HCT116 (cell line): ENCODE measurements at regions of chr5 and their contacts with region 1.

Region 1: DNA sequence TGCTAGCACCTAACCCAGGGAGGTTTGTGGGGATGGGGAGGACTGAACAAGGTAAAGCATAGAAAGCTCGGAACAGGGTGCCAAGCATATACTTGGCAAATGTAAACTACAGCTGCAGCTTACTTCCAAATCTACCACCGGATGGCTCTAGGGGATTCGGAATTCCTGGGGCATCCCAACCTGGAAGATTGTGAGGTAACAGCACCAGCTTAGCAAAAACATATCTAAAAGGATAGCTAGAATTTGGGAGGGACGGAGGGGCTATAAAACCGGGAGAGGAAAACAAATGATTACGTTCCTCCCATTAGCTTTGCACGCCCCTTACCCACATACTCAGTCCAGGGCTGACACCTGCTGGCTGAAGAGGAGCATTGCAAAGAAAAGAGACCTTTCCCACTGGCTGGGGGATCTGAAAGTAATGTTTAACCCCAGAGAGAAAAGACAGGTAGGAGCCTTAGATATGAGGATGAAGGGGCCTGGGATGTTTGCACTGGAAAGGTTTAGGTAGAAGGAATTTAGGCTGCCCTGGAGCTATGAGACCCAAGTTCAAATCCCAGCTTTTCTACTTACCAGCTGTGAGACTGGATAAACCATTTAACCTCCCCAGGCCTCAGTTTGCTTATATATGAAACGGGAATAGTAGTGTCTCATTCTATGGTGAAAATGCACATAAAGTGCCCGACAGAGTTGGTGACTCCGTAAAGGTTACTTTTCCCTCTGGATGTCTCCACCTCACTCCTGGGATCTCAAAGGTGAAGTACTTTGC is 73.6 kb downstream of the FAM114A2 start:
- DNase-seq: peak; percentile 32
- ATAC-seq: peak; percentile 93
- H3K4me3 ChIP-seq: no peak overlapping the region
- H3K27ac ChIP-seq: no peak overlapping the region
- H3K4me1 ChIP-seq: no peaks in the 10 kb centered on the region
- H3K27me3 ChIP-seq: peaks cover 18% of the 10 kb centered on the region; the same call in 1 of the 2 replicates
- CTCF ChIP-seq: peak; percentile 84 to 93 (median 91)
- POLR2A ChIP-seq: no peak
- RAD21 ChIP-seq: peak; percentile 95

Region 2: GRCh38 chr5:152532714-152533113 is 1432.3 kb before region 1 on chr5:
- CTCF ChIA-PET with region 1: interaction called, 22 read pairs
- POLR2A ChIA-PET with region 1: no interaction called
- RAD21 ChIA-PET with region 1: interaction called in 1 of 2 experiments, 3 read pairs
- intact Hi-C with region 1: loop called (anchors 1 kb)
- DNase-seq: peak; percentile 42
- ATAC-seq: peak; percentile 64
- H3K4me3 ChIP-seq: no peak overlapping the region
- H3K27ac ChIP-seq: no peak overlapping the region
- H3K4me1 ChIP-seq: no peaks in the 10 kb centered on the region
- H3K27me3 ChIP-seq: peaks cover 7% of the 10 kb centered on the region; the same call in 1 of the 2 replicates
- CTCF ChIP-seq: peak in 2 of 3 experiments; percentile 57 to 63; a peak in 3 of 6 replicates
- POLR2A ChIP-seq: no peak
- RAD21 ChIP-seq: peak; percentile 78

Region 3: DNA sequence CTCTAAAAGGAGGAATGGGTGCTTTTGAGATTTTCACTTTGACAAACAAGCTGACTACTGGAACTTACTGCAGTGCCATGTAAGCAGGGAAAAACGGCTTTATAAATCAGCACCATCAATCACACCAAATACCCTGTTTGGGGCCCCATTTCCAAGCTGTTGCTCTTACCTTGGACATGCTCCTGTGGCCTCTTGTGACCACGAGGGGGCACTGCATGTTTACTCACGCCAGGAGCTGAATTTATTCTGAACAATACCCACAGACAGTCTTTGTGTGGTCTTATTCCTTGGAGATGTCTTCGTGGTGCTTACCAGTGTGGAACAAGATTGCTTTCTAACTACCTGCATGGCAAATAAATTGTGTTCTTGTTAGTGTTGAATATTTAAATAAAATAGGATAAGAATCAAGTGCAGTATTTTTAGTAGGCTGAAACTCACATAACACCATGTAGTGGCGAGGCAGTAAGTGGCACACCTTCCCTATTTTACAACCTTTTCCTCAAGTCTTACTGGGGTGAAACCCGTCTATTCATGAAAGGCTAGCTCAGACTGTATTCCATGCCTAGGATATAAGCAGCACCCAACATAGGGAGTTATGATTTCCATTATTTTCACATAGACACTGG is 1404.4 kb before region 1 on chr5:
- CTCF ChIA-PET with region 1: interaction called, 12 read pairs
- POLR2A ChIA-PET with region 1: no interaction called
- RAD21 ChIA-PET with region 1: interaction called, 3 to 4 read pairs
- intact Hi-C with region 1: loop called (anchors 1 kb)
- DNase-seq: peak; percentile 18
- ATAC-seq: peak; percentile 63
- H3K4me3 ChIP-seq: no peak overlapping the region
- H3K27ac ChIP-seq: no peak overlapping the region
- H3K4me1 ChIP-seq: no peaks in the 10 kb centered on the region
- H3K27me3 ChIP-seq: no peaks in the 10 kb centered on the region
- CTCF ChIP-seq: peak; percentile 16 to 78 (median 66); a peak in 4 of 6 replicates
- POLR2A ChIP-seq: no peak
- RAD21 ChIP-seq: peak; percentile 59

Region 4: GRCh38 chr5:153827397-153827796 is 137.7 kb before region 1 on chr5:
- CTCF ChIA-PET with region 1: interaction called, 11 read pairs
- POLR2A ChIA-PET with region 1: no interaction called
- RAD21 ChIA-PET with region 1: interaction called in 1 of 2 experiments, 3 read pairs
- intact Hi-C with region 1: loop called (anchors 5 kb)
- DNase-seq: no peak
- ATAC-seq: peak; percentile 65
- H3K4me3 ChIP-seq: no peak overlapping the region
- H3K27ac ChIP-seq: no peak overlapping the region
- H3K4me1 ChIP-seq: no peaks in the 10 kb centered on the region
- H3K27me3 ChIP-seq: peaks cover 17% of the 10 kb centered on the region
- CTCF ChIP-seq: peak in 2 of 3 experiments; percentile 33 to 39; a peak in 2 of 6 replicates
- POLR2A ChIP-seq: no peak
- RAD21 ChIP-seq: peak; percentile 38